MCF 10A (cell line): ENCODE measurements at regions of chr1 and their contacts with region 1.

Region 1: DNA sequence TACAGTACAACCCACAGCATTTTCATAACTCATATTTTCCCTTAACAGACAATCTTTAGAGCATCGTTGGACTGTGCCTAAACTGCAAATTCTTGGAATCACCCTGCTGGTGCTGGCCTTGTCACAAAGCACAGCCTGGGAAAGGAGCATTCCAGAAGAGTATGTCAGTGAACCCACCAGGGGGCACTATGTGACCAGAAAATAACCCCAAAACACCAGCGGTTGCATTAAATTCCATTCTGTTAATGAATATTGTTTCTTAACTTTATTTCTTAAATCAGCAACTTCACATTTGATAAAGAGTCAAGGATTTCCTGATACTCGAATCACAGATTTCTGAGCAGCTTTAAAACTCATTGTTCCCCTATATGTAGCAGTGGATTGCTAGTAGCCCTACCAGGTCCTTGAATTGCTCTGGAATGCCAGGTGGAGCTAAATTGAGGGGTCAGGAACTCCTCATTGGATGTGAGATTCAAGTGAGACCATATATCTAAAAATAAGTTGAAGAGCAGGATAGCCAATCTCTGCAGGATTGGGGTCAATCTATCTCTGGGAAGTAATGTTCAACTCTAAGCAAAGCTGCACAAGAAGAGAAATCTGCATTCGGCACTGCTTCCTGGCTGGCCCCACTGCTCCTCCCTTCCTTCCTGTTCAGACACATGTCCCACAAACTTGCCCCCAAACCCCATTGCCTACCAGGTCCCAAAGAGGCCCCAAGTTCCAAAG is 12.7 kb upstream of the RAB4A start:
- DNase-seq: peak; percentile 88
- H3K4me3 Mint-ChIP-seq: no peak overlapping the region
- H3K27ac Mint-ChIP-seq: no peak overlapping the region
- H3K4me1 Mint-ChIP-seq: peaks cover 23% of the 10 kb centered on the region
- H3K27me3 Mint-ChIP-seq: no peaks in the 10 kb centered on the region
- CTCF ChIP-seq: peak; percentile 98

Region 2: DNA sequence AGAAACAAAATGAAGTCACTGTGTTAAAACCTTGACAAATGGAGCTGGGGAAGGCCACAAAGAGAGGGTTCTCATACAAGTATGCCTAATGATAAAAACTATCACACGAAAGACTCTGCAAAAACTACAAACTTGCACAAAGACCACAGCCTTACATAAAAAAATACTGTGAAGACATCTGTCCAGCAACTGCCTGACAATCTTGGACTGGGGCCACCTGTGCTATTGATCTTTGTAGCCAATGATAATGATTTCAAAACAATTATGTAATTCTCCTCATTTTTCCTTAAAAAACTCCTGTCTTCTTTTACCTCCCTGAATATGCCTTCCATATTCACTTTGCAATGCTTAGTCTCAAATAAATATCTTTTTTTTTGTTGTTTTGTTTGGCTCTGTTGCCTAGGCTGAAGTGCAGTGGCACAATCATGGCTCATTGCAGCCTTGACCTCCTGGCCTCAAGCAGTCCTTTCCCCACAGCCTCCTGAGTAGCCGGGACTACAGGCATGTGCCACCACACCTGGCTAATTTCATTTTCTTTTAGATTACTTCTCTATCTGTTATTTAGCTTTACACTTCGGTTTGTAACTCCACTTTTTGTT is 602.3 kb before region 1 on chr1:
- CTCF ChIA-PET with region 1: interaction called, 176 read pairs
- POLR2A ChIA-PET with region 1: interaction called, 3 read pairs
- intact Hi-C with region 1: no loop called
- DNase-seq: no peak
- H3K4me3 Mint-ChIP-seq: no peak overlapping the region
- H3K27ac Mint-ChIP-seq: no peak overlapping the region
- H3K4me1 Mint-ChIP-seq: peaks cover 6% of the 10 kb centered on the region
- H3K27me3 Mint-ChIP-seq: no peaks in the 10 kb centered on the region
- CTCF ChIP-seq: no peak

Region 3: DNA sequence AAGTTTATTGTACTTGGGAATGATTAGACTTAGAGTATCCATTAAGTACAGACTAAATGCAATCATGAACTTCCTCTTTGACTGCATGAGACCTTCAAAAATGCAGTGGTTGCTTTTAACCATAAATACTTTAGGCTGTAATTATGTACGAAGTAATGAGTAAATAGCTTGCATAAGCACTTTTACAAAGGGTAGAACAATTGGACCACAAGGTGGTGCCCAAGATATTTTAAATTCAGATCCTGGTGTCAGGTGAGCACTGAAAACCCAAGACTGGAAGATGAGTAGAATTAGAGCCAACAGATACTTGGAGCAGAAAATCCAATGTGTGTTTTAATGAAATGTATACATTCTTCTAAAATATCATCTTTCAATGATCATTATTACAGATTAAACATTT is 566.3 kb before region 1 on chr1:
- CTCF ChIA-PET with region 1: interaction called, 128 read pairs
- POLR2A ChIA-PET with region 1: interaction called, 20 read pairs
- intact Hi-C with region 1: loop called (anchors 1 kb)
- DNase-seq: peak; percentile 84
- H3K4me3 Mint-ChIP-seq: no peak overlapping the region
- H3K27ac Mint-ChIP-seq: no peak overlapping the region
- H3K4me1 Mint-ChIP-seq: peaks cover 18% of the 10 kb centered on the region
- H3K27me3 Mint-ChIP-seq: no peaks in the 10 kb centered on the region
- CTCF ChIP-seq: peak; percentile 85

Region 4: GRCh38 chr1:229035054-229035747 is 223.0 kb before region 1 on chr1:
- CTCF ChIA-PET with region 1: interaction called, 11 read pairs
- POLR2A ChIA-PET with region 1: no interaction called
- intact Hi-C with region 1: no loop called
- DNase-seq: no peak
- H3K4me3 Mint-ChIP-seq: no peak overlapping the region
- H3K27ac Mint-ChIP-seq: no peak overlapping the region
- H3K4me1 Mint-ChIP-seq: peaks cover 29% of the 10 kb centered on the region
- H3K27me3 Mint-ChIP-seq: peaks cover 20% of the 10 kb centered on the region
- CTCF ChIP-seq: no peak

Region 5: DNA sequence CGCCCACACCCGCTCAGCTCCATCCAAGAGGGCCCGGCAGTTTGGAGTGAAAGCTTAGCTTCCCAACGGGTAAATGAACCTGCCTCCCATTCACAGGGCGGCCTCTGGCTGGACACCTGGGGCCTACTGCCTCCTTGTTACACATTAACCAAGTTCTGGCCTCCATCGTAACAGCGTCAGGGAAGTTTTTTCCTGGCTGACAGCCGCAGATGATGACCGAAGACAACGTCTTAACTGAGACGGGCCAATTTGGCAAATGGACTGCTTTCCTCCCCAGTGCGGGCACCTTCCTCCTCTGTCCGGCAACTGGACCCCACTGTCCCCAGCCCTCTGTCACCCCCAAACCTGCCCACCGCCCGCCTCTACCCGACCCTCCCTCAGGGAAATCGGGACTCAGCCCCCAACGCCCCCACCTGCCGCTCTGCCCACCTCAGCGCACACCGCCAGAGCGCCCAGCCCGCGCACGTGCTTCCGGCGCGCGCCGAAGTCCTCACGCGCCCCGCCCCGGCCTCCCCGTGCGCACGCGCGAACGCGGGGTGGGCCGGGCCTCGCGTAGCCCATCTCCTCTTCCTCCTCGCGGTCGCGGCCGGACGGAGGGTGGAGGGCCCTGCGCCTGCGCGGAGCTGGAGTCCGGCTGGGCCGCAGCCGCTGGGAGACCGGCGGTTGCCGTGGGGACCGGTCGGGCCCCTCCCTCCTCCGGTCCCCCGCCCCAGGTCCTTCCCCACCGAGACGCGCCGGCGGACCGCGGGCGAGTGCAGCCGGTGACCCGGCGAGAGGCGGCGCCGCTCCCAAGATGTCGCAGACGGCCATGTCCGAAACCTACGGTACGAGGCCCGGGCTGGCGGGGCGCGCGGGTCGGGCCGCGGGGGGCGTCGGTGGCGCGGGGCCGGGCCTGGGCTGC is 12.6 kb after region 1 on chr1 and contains the start of gene RAB4A:
- CTCF ChIA-PET with region 1: interaction called, 32 read pairs
- POLR2A ChIA-PET with region 1: interaction called, 74 read pairs
- intact Hi-C with region 1: no loop called
- DNase-seq: peak; percentile 96
- H3K4me3 Mint-ChIP-seq: peak within 1 kb of the TSS; percentile 80
- H3K27ac Mint-ChIP-seq: peak within 1 kb of the TSS; percentile 77
- H3K4me1 Mint-ChIP-seq: peaks cover 48% of the 10 kb centered on the region
- H3K27me3 Mint-ChIP-seq: no peaks in the 10 kb centered on the region
- CTCF ChIP-seq: no peak
- total RNA-seq, gene RAB4A: 87.4 and 88.6 TPM in 2 replicates

Region 6: GRCh38 chr1:229495782-229496181 is 237.6 kb after region 1 on chr1:
- CTCF ChIA-PET with region 1: interaction called, 23 read pairs
- POLR2A ChIA-PET with region 1: no interaction called
- intact Hi-C with region 1: no loop called
- DNase-seq: no peak
- H3K4me3 Mint-ChIP-seq: no peak overlapping the region
- H3K27ac Mint-ChIP-seq: no peak overlapping the region
- H3K4me1 Mint-ChIP-seq: no peaks in the 10 kb centered on the region
- H3K27me3 Mint-ChIP-seq: no peaks in the 10 kb centered on the region
- CTCF ChIP-seq: no peak

Region 7: DNA sequence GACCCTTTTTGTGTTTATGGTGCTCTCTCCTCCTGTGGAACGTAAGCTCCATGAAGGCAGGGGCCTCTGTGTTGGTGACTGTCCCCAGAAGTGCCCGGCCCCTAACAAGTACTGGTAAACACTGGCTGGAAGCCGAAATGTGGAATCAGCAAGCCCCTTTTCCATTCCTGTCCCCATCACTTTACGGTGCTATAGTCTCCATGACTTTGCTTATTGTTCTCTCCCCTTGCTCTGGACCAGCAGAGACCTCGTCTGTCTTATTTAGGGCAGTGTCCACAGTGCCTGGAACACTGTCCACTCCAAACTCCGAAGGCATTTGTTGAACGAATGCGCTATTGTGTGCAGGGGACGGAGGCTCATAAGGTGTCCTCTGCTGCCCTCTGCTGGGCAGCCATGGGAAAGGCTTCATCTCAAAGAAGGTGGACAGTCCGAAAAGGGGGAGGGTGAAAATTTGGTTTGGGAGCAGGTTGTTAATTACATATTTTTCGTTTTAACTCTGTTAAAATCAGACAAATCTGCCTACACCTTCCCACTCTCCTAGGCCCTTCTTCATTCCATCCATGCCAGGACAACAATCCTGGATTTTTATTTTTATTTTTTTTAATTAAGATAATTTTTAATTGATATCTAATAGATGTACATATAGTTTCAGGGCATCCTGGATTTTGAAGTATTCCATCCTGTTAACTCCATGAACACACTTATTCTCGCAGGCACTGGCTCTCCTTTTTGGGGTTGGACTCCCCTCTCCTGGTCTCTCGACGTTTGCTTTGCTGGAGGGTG is 1052.4 kb after region 1 on chr1:
- CTCF ChIA-PET with region 1: interaction called, 5 read pairs
- POLR2A ChIA-PET with region 1: no interaction called
- intact Hi-C with region 1: loop called (anchors 1 kb)
- DNase-seq: peak; percentile 96
- H3K4me3 Mint-ChIP-seq: no peak overlapping the region
- H3K27ac Mint-ChIP-seq: no peak overlapping the region
- H3K4me1 Mint-ChIP-seq: peaks cover 34% of the 10 kb centered on the region
- H3K27me3 Mint-ChIP-seq: peaks cover 15% of the 10 kb centered on the region
- CTCF ChIP-seq: peak; percentile 99